Activated CD8-positive, alpha-beta memory T cell treated with anti-CD3 and anti-CD28 coated beads, Interleukin-2, amount 10 ng/mL, durations not matched to agents 7 days and 5 days (primary cell): ENCODE measurements at regions of chr7 and their contacts with region 1.

Region 1: DNA sequence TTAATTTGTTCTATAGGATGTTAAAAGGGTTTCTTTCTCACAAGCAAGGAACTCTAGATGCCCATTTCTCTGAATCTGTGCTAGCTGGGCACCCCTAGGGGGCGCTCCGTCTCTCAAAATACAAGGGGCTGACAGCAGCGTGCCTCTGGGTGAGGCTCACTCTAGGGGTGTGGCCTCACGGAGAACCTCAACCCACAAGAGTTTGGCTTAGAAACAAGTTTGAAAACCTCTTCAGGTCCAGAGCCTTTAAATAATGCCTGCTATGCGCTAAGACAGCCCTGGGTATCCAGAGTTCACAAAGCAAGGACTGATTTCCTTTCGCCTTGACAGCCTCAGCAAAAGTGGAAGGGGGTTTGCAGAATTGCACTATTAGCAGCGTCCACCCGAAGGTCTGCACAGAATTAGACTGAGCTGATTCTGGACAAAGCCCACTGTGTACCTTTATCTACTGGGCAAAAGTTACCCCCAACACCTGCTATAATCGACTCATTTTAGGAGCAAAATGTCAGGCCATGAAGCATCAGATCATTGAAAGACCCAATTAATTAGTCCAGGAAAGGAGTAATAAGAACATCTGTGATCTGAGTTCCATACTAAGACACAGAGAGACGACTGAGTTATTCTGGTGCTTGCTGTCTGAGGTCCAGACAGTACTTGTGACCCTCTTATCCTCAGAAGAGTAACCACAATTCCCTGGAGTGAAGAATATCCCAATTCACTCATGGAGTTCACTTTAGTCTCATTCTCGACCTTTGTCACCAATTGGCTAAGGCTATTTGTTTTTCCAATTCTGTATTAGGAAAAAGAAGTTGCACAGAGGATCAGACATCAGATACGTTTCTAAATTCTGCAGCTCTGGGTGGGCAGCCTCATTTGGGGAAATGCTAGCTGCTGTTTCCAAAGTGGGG is 574 bp upstream of the CPED1 start:
- DNase-seq: peak; percentile 92
- ATAC-seq: peak; percentile 95
- H3K4me3 Mint-ChIP-seq: peak overlapping the region; percentile 73
- H3K27ac Mint-ChIP-seq: no peak overlapping the region
- H3K4me1 Mint-ChIP-seq: peaks cover 21% of the 10 kb centered on the region
- H3K27me3 Mint-ChIP-seq: peaks cover 50% of the 10 kb centered on the region

Region 2: GRCh38 chr7:120927454-120928103 is 60.4 kb before region 1 on chr7:
- CTCF ChIA-PET with region 1: no interaction called
- DNase-seq: no peak
- ATAC-seq: no peak
- H3K4me3 Mint-ChIP-seq: no peak overlapping the region
- H3K27ac Mint-ChIP-seq: no peak overlapping the region
- H3K4me1 Mint-ChIP-seq: peaks cover 4% of the 10 kb centered on the region
- H3K27me3 Mint-ChIP-seq: peaks cover 17% of the 10 kb centered on the region

Region 3: DNA sequence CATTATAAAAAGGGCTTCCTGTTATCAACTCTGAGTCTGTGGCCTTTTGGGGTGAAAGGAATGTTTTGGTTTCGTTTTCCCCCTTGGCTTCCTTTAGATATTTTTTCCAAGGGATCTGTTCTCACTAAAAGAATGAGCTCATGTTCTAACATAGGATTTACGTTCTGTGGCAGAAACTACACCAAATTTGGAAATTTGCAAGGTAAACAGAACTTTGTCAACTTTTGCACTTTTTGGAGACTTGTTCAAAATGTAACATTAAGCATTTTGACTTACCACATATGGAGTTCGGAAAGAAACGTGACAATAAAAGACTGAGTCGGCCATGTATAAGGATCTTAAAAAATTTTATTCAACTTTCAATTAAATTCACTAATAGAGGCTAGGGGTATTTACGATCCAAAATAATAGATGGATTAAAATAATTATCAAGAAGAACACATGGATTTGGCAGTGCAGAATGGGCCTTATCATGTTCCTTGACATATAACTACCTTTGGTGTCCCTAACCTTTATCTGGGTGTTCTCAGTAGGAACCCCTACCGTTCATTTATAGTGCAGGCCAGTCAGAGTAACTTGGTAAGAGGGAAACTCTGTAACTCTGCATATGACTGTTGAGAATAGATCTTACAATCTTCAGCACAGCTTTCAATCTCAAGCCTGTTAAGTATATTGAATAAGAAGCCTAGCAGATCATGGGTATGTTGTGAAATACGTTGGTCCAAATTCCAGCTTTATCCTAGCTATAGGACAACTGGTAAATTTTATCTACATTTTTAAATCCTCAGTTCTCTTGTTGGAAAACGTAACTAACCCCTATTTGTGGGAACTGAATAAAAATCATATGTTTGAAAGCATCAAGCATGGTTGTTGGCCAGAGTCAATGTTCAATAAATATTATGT is 12.4 kb after region 1 on chr7:
- CTCF ChIA-PET with region 1: interaction called, 12 read pairs
- DNase-seq: no peak
- ATAC-seq: no peak
- H3K4me3 Mint-ChIP-seq: no peak overlapping the region
- H3K27ac Mint-ChIP-seq: no peak overlapping the region
- H3K4me1 Mint-ChIP-seq: peaks cover 11% of the 10 kb centered on the region
- H3K27me3 Mint-ChIP-seq: peaks cover 25% of the 10 kb centered on the region

Region 4: GRCh38 chr7:121081327-121081936 is 93.5 kb after region 1 on chr7:
- CTCF ChIA-PET with region 1: interaction called, 43 read pairs
- DNase-seq: no peak
- ATAC-seq: peak; percentile 81
- H3K4me3 Mint-ChIP-seq: no peak overlapping the region
- H3K27ac Mint-ChIP-seq: no peak overlapping the region
- H3K4me1 Mint-ChIP-seq: peaks cover 3% of the 10 kb centered on the region
- H3K27me3 Mint-ChIP-seq: peaks cover 30% of the 10 kb centered on the region

Region 5: GRCh38 chr7:121107923-121108498 is 120.1 kb after region 1 on chr7:
- CTCF ChIA-PET with region 1: interaction called, 35 read pairs
- DNase-seq: no peak
- ATAC-seq: peak; percentile 85
- H3K4me3 Mint-ChIP-seq: no peak overlapping the region
- H3K27ac Mint-ChIP-seq: no peak overlapping the region
- H3K4me1 Mint-ChIP-seq: no peaks in the 10 kb centered on the region
- H3K27me3 Mint-ChIP-seq: peaks cover 34% of the 10 kb centered on the region